Heart right ventricle (tissue), 16 donors: ENCODE measurements at regions of chr2 and their contacts with region 1.

Region 1: DNA sequence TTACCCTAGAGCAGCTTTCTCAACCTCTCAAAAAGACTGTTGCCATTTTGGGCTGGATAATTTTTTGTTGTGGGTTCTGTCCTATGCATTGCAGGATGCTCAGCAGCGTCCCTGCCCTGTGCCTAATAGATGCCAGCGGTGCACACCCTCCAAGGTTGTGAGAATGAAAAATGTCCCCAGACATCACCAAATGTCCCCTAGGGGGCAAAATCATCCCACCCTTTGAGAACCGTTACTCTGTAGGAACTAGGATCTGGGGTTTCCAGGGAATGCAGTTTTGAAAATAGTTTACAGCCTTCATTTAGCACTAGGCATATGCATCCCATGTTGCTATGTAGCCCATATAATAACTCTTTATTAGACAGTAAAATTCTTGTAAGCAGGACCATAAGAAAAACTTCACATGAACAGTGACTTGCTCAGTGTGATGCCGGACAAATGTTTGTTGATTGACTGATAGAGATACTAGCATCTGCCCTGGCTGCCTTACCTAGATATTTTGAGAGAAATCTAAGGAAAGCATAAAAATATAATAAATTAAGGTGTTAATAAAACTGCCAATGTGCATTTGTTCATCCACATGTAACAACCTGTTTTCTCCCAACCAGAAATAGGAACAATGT is 79.2 kb upstream of the EPC2 start:
- DNase-seq: no peak
- ATAC-seq: peak in 2 of 8 donors; percentile 57 to 59
- H3K4me3 ChIP-seq: no peak overlapping the region
- H3K27ac ChIP-seq: no peak overlapping the region
- H3K4me1 ChIP-seq: peaks cover 0 to 5% (median 0%) of the 10 kb centered on the region in 9 donors
- H3K27me3 ChIP-seq: peaks cover 0 to 8% (median 0%) of the 10 kb centered on the region in 7 donors
- CTCF ChIP-seq: peak in 7 of 9 donors; percentile 28 to 56 (median 41)

Region 2: DNA sequence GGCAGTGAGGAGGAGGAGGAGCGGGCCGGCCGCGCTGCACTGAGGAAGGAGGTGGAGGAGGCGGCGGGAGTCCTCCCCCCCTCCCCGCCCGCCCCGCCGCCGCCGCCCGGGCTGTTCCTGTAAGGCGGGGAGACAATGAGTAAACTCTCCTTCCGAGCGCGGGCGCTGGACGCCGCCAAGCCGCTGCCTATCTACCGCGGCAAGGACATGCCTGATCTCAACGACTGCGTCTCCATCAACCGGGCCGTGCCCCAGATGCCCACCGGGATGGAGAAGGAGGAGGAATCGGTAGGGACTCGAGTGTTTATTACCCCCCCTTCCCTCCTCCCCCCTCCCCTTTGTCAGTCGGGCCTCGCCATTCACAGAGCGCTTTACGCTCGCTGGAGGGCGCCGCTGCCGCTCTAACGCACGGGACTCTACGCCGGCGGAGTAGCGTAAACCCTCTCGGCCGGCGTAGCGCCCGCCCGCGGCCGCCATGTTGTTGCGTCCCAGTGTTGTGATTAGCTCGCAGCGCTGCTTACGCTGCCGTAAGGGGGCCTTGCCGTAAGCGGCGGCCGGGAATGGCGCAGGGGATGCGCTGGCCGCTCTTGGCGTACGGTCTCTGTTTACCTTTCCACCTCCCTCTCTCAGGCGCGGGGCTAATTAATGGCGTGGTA is 79.6 kb after region 1 on chr2:
- intact Hi-C with region 1: loop called in 1 of 10 experiments (anchors 2 kb)
- DNase-seq: peak; percentile 92 to 95
- ATAC-seq: peak; percentile 87 to 95 (median 92)
- H3K4me3 ChIP-seq: peak overlapping the region; percentile 77 to 97 (median 89)
- H3K27ac ChIP-seq: peak overlapping the region; percentile 99 to 100 (median 100)
- H3K4me1 ChIP-seq: peaks cover 0 to 56% (median 32%) of the 10 kb centered on the region in 9 donors
- H3K27me3 ChIP-seq: no peaks in the 10 kb centered on the region
- CTCF ChIP-seq: peak in 8 of 9 donors; percentile 17 to 48 (median 36)

Region 3: DNA sequence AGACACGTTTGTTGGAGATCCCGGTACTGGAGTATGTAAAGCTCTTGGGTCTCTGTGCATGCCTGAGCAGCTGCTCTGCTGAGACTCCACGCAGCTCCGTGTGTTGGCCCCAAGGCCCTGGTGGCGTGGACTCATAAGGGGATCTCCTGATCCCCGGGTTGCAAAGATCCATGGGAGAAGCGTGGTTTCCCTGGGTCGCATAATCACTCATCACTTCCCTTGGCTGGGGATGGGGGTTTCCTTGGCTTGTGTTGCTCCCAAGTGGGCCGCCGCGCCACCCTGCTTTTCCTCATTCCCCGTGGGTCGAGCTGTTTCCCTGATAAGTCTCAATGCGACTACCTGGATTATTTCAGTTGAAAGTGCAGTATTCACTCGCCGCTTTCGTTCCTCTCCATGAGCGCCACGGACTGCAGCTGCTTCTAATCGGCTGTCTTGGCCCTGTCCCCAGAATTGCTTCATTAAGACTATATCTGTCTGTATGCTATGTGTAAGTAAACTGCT is 155.2 kb after region 1 on chr2:
- intact Hi-C with region 1: no loop called
- DNase-seq: peak in 1 of 2 donors; percentile 18
- ATAC-seq: peak; percentile 55 to 86 (median 70)
- H3K4me3 ChIP-seq: peak overlapping the region in 6 of 10 donors; percentile 14 to 32 (median 25)
- H3K27ac ChIP-seq: peak overlapping the region in 3 of 10 donors; percentile 3 to 28 (median 17)
- H3K4me1 ChIP-seq: peaks cover 3 to 72% (median 39%) of the 10 kb centered on the region in 9 donors
- H3K27me3 ChIP-seq: no peaks in the 10 kb centered on the region
- CTCF ChIP-seq: no peak

Region 4: DNA sequence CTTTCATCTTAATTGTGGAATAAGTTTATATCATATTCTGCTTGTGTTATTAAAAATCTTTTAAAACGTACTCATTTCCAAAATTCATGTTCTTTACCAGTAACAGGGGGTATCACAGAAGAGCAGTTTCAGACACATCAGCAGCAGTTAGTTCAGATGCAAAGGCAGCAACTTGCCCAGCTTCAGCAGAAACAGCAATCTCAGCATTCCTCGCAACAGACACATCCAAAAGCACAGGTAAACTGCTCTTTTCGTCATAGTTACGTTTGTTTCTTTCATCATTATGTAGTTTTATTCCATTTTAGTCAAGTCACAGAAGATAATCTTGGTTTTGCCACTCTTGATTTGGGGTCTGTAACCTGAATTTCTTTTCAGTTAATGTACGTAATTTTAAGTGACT is 216.2 kb after region 1 on chr2:
- intact Hi-C with region 1: no loop called
- DNase-seq: no peak
- ATAC-seq: no peak
- H3K4me3 ChIP-seq: no peak overlapping the region
- H3K27ac ChIP-seq: no peak overlapping the region
- H3K4me1 ChIP-seq: peaks cover 0 to 3% (median 0%) of the 10 kb centered on the region in 9 donors
- H3K27me3 ChIP-seq: no peaks in the 10 kb centered on the region
- CTCF ChIP-seq: no peak

Region 5: GRCh38 chr2:148971547-148971946 is 406.2 kb after region 1 on chr2:
- intact Hi-C with region 1: loop called in 1 of 10 experiments (anchors 10 kb)
- DNase-seq: no peak
- ATAC-seq: no peak
- H3K4me3 ChIP-seq: no peak overlapping the region
- H3K27ac ChIP-seq: no peak overlapping the region
- H3K4me1 ChIP-seq: no peaks in the 10 kb centered on the region
- H3K27me3 ChIP-seq: no peaks in the 10 kb centered on the region
- CTCF ChIP-seq: no peak